Prostate gland (tissue), 2 donors: ENCODE measurements at regions of chrX and their contacts with region 1.

Region 1: DNA sequence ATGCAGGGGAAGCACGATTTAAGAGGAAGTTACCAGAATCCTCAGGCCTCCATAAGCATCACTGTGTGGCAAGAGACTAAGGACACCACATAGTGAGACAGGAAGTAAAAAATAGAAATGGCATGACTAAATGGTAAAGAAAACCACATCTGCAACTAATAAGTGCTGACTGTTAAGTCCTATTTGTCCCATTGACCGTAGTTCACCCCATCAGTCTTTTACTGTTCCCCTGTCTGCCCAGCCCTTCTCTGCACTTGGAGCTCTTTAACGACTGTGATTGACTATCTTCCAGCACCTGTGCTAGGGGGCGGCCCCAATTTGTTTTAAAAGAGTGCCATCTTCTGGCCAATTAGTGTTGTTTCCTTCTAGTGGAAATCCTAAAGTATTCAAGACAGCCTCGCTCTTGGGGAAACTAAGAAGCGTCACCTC is 94.2 kb downstream of the MAOA start:
- DNase-seq: peak; percentile 54
- H3K4me3 ChIP-seq: no peak overlapping the region
- H3K27ac ChIP-seq: no peak overlapping the region
- H3K4me1 ChIP-seq: no peaks in the 10 kb centered on the region
- H3K27me3 ChIP-seq: no peaks in the 10 kb centered on the region
- CTCF ChIP-seq: peak in 3 of 4 experiments; percentile 52 to 66 (median 62)
- POLR2A ChIP-seq: no peak

Region 2: GRCh38 chrX:43654431-43655150 is 95.7 kb before region 1 on chrX:
- intact Hi-C with region 1: loop called (anchors 5 kb)
- DNase-seq: peak; percentile 87
- H3K4me3 ChIP-seq: peak overlapping the region; percentile 54 to 56
- H3K27ac ChIP-seq: peak overlapping the region; percentile 84 to 85
- H3K4me1 ChIP-seq: no peaks in the 10 kb centered on the region
- H3K27me3 ChIP-seq: no peaks in the 10 kb centered on the region
- CTCF ChIP-seq: peak in 1 of 4 experiments; percentile 25
- POLR2A ChIP-seq: peak; percentile 90

Region 3: GRCh38 chrX:43813898-43814297 is 63.6 kb after region 1 on chrX:
- intact Hi-C with region 1: no loop called
- DNase-seq: no peak
- H3K4me3 ChIP-seq: no peak overlapping the region
- H3K27ac ChIP-seq: no peak overlapping the region
- H3K4me1 ChIP-seq: no peaks in the 10 kb centered on the region
- H3K27me3 ChIP-seq: no peaks in the 10 kb centered on the region
- CTCF ChIP-seq: no peak
- POLR2A ChIP-seq: no peak